Esophagus squamous epithelium (tissue), 5 donors: ENCODE measurements at regions of chr5 and their contacts with region 1.

Region 1: DNA sequence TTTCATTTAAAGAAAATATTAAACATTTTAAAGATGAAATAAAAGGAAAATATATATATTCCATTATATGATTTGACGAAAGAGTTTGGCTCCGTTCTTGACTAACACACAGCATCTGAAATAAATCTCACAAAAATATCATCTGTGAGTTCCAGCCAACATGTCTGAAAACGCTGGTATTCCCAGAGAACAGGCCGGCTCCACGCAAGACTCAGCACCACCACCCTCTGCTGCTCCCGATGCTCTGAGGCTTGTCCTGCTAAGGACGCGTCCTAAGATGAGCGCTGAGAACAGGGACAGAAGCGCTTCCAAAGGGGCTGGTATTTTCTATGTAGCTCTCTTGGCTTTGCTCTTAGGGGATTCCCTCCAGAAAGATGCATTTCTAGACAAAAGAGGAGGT is 40.6 kb upstream of the N4BP3 start:
- DNase-seq: no peak
- H3K4me3 ChIP-seq: no peak overlapping the region
- H3K27ac ChIP-seq: no peak overlapping the region
- H3K4me1 ChIP-seq: peaks cover 0 to 17% (median 3%) of the 10 kb centered on the region in 3 donors
- H3K27me3 ChIP-seq: peaks cover 0 to 29% (median 0%) of the 10 kb centered on the region in 4 donors
- CTCF ChIP-seq: no peak
- POLR2A ChIP-seq: no peak

Region 2: DNA sequence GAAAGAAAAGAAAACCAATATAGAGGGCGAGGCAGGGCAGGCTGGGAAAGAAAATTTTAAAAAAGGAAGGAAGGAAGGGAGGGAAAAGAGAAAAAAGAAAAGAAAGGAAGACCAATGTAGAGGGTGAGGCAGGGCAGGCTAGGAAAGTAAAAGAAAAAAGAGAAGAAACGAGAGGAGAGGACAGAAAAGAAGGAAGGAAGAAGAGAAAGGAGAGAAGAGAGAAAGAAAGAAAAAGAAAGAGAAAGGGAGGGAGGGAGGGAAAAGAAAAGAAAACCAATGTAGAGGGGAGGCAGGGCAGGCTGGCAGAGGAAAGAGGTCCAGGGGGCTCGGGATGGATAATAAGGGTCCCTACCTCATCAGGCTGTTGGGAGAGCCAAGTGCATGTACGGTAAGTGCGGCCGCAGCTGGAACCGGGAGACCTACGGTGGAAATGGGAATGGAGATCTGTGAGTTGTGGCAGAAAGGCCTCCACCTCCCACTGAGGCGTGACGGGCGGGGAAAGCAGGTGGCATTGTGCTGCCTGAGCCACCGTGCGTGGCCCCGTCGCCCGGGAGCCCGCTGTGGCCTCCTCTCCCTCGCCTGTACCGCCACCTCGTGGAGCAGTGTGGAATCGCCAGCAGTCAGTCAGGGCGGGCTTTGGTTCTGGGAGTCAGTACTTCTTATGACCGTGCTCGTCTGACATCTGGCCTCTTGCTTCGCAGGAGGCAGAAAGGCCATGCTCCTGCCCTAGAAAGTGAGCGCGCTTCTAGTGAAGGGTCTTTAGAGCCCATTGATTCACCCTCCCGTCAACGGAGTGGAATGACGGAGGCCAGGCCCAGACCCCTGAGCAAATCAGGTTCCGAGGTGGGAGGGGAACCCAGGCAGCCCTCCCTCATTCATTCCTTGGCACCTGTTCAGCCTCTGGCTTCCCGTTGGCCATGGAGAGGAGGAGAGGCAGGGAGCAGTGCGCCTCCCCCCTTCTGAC is 91.3 kb after region 1 on chr5:
- intact Hi-C with region 1: loop called (anchors 2 kb)
- DNase-seq: peak; percentile 24
- H3K4me3 ChIP-seq: peak overlapping the region in 2 of 4 donors; percentile 4 to 51
- H3K27ac ChIP-seq: no peak overlapping the region
- H3K4me1 ChIP-seq: peaks cover 8 to 10% (median 8%) of the 10 kb centered on the region in 3 donors
- H3K27me3 ChIP-seq: peaks cover 0 to 47% (median 0%) of the 10 kb centered on the region in 4 donors
- CTCF ChIP-seq: peak; percentile 96 to 99 (median 98)
- POLR2A ChIP-seq: no peak